Left ventricle myocardium superior (tissue), 1 donor: ENCODE measurements at regions of chr2 and their contacts with region 1.

Region 1: DNA sequence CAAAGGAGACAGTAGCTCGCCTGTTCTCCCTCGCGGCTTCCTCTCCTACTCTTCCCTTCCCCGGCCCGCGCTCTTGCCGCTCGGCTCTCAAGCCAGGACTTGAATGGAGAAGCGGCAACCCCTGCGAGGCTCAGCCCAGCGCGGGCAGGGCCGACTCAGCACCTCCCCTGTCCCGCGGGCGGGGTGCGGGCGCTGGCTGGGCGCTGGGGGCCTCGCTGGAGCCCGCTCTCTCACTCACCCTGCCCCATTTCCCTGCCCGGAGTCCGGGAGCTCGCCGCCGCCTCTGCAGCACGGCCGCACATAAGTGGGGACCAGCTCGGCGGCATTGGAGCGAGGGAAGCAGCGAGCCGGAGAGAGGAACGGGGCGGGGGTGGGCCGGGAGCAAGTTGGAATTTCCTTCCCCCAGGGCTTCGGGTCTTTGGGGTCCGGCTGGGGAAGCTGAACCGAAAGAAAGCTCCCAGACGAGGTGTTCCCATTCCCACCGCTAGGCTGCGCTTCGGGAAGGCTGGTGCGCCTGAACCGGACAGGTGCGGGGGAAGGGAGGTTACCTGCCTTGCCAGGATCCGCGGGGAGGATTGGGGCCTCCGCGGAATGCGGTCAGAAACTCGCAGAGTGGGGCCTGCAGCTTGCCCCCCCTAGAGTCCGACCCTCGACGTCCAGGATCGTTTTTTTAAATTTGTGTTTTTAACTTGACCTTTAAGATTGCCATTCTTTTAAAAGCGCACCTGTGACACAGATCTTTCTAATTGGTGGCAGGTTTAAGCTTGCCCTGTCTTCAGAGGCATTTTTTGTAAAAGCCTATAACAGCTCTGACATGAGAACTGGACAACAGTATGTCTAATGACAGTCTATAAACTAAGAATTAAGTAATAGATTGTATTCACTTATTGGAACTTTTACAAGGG is at the start of gene COBLL1:
- DNase-seq: peak; percentile 82
- ATAC-seq: peak; percentile 82
- total RNA-seq, gene COBLL1: 17.0 TPM

Region 2: GRCh38 chr2:164745012-164745805 is 96.8 kb before region 1 on chr2:
- intact Hi-C with region 1: loop called (anchors 5 kb)
- DNase-seq: no peak
- ATAC-seq: no peak

Region 3: GRCh38 chr2:164910101-164910899 is 68.3 kb after region 1 on chr2:
- intact Hi-C with region 1: loop called (anchors 5 kb)
- DNase-seq: no peak
- ATAC-seq: peak; percentile 56